Activated naive CD4-positive, alpha-beta T cell treated with anti-CD3 and anti-CD28 coated beads for 36 hours (primary cell): ENCODE measurements at regions of chr14 and their contacts with region 1.

Region 1: GRCh38 chr14:21510735-21511657 is at the start of gene METTL3:
- DNase-seq: peak; percentile 96
- H3K4me3 Mint-ChIP-seq: peak within 1 kb of the TSS; percentile 96
- H3K27ac Mint-ChIP-seq: peak within 1 kb of the TSS; percentile 96
- H3K4me1 Mint-ChIP-seq: peaks cover 30% of the 10 kb centered on the region
- H3K27me3 Mint-ChIP-seq: no peaks in the 10 kb centered on the region
- total RNA-seq, gene METTL3: 60.6 TPM

Region 2: GRCh38 chr14:21308479-21309237 is 202.3 kb before region 1 on chr14:
- CTCF ChIA-PET with region 1: no interaction called
- intact Hi-C with region 1: loop called (anchors 1 kb)
- DNase-seq: peak; percentile 94
- H3K4me3 Mint-ChIP-seq: peak overlapping the region; percentile 66
- H3K27ac Mint-ChIP-seq: peak overlapping the region; percentile 87
- H3K4me1 Mint-ChIP-seq: peaks cover 23% of the 10 kb centered on the region
- H3K27me3 Mint-ChIP-seq: no peaks in the 10 kb centered on the region

Region 3: GRCh38 chr14:21414137-21414631 is 96.8 kb before region 1 on chr14:
- CTCF ChIA-PET with region 1: no interaction called
- intact Hi-C with region 1: loop called (anchors 2 kb)
- DNase-seq: peak; percentile 14
- H3K4me3 Mint-ChIP-seq: no peak overlapping the region
- H3K27ac Mint-ChIP-seq: peak overlapping the region; percentile 77
- H3K4me1 Mint-ChIP-seq: peaks cover 35% of the 10 kb centered on the region
- H3K27me3 Mint-ChIP-seq: no peaks in the 10 kb centered on the region

Region 4: DNA sequence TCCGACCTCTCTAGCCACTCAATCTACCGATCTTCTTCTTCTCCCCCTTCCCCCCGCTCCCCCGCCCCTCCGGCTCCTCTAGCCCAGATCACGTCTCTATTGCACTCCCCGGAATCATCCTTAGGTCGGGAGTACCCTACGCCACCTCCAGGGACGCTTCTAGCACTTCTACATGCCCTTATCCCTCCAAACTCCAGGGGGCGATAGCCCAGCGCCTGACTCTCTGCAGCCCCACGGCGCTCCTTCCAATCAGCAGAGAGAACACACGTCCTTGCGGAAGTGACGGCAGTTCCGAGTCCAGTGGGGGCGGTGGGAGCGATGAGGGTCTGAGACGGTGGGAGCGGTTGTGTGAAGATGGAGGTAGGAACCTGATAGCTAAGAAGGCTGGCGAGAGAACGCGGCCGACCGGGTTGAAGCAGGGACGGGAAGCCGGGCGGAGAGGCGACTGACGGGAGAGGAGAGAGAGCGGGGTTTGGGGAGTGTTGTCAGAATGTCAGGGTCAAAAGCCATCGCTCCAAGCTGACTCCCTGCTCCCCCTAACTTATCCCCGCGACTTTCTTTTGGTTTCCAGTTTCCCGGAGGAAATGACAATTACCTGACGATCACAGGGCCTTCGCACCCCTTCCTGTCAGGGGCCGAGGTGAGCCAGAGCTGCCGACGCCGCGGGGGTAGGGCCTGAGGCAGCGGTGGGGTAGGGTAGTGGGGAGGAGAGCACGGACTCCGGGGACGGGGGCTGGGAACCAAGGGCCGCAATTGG is 33.9 kb before region 1 on chr14 and contains the starts of genes RAB2B and TOX4:
- CTCF ChIA-PET with region 1: interaction called, 4 read pairs
- intact Hi-C with region 1: loop called (anchors 1 kb)
- DNase-seq: peak; percentile 97
- H3K4me3 Mint-ChIP-seq: peak within 1 kb of the TSS; percentile 100
- H3K27ac Mint-ChIP-seq: peak within 1 kb of the TSS; percentile 98
- H3K4me1 Mint-ChIP-seq: peaks cover 31% of the 10 kb centered on the region
- H3K27me3 Mint-ChIP-seq: no peaks in the 10 kb centered on the region
- total RNA-seq, gene RAB2B: 20.5 to 21.4 TPM
- total RNA-seq, gene TOX4: 57.4 to 58.6 TPM

Region 5: GRCh38 chr14:21525962-21526671 is 15.1 kb after region 1 on chr14 and contains the start of gene SALL2:
- CTCF ChIA-PET with region 1: interaction called, 7 read pairs
- intact Hi-C with region 1: loop called (anchors 1 kb)
- DNase-seq: peak; percentile 86
- H3K4me3 Mint-ChIP-seq: peak within 1 kb of the TSS; percentile 79
- H3K27ac Mint-ChIP-seq: peak within 1 kb of the TSS; percentile 70
- H3K4me1 Mint-ChIP-seq: peaks cover 9% of the 10 kb centered on the region
- H3K27me3 Mint-ChIP-seq: no peaks in the 10 kb centered on the region
- total RNA-seq, gene SALL2: 3.1 to 4.1 TPM

Region 6: GRCh38 chr14:22737052-22737451 is 1226.1 kb after region 1 on chr14:
- CTCF ChIA-PET with region 1: no interaction called
- intact Hi-C with region 1: loop called (anchors 1 kb)
- DNase-seq: peak; percentile 67
- H3K4me3 Mint-ChIP-seq: no peak overlapping the region
- H3K27ac Mint-ChIP-seq: no peak overlapping the region
- H3K4me1 Mint-ChIP-seq: peaks cover 7% of the 10 kb centered on the region
- H3K27me3 Mint-ChIP-seq: peaks cover 2% of the 10 kb centered on the region